ENCODE measurements at regions of chr17 and their contacts with region 1.

Region 1: GRCh38 chr17:67386965-67387551 is 10.0 kb downstream of the PITPNC1 start:
- DNase-seq: no peak
- ATAC-seq: peak; percentile 68
- H3K4me3 ChIP-seq: no peak overlapping the region
- H3K27ac ChIP-seq: peak overlapping the region; percentile 62
- H3K4me1 ChIP-seq: peaks cover 41% of the 10 kb centered on the region
- H3K27me3 ChIP-seq: no peaks in the 10 kb centered on the region
- CTCF ChIP-seq: peak; percentile 90

Region 2: GRCh38 chr17:67475236-67475937 is 88.3 kb after region 1 on chr17:
- CTCF ChIA-PET with region 1: interaction called, 15 read pairs
- POLR2A ChIA-PET with region 1: no interaction called
- in situ Hi-C with region 1: no loop called
- intact Hi-C with region 1: loop called (anchors 2 kb)
- DNase-seq: peak; percentile 80
- ATAC-seq: peak; percentile 85
- H3K4me3 ChIP-seq: no peak overlapping the region
- H3K27ac ChIP-seq: peak overlapping the region; percentile 63
- H3K4me1 ChIP-seq: peaks cover 25% of the 10 kb centered on the region
- H3K27me3 ChIP-seq: no peaks in the 10 kb centered on the region
- CTCF ChIP-seq: peak; percentile 88

Region 3: DNA sequence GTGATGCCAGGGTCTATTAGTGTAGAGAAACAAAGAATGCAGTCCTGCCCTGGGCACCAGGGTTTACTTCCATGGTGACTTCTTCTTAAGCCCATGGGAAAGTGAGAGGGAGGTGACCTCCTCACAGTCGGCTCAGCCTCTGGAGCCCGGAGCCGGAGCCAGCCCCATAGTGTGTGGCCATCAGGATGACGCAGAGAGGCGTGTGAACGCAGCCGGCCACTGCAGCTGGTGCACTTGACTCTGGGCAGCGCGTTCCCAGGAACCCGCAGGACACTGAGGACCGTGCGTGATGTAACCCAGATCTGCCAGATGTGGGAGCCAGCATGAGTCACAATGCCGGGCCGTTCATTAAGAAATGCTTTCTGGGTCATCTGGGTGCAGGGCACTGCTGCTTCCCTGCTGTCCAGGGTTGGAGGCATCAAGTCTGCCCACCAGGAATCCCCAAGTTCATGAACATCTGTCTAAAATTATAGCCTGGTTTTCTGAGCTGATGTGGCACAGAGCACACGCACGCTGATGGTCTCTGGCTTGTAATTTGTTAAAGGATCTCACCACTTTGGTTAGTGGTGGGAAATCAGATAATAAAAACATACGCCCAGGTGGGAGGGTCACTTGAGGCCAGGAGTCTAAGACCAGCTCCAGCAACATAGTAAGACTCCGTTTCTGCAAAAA is 104.1 kb after region 1 on chr17:
- CTCF ChIA-PET with region 1: no interaction called
- POLR2A ChIA-PET with region 1: no interaction called
- in situ Hi-C with region 1: no loop called
- intact Hi-C with region 1: no loop called
- DNase-seq: no peak
- ATAC-seq: peak; percentile 95
- H3K4me3 ChIP-seq: peak overlapping the region; percentile 27 to 51
- H3K27ac ChIP-seq: 0 out of 2 replicates have a peak overlapping the region, but pooled peaks have one; percentile 29
- H3K4me1 ChIP-seq: peaks cover 18% of the 10 kb centered on the region
- H3K27me3 ChIP-seq: no peaks in the 10 kb centered on the region
- CTCF ChIP-seq: no peak

Measured in Panc1 (cell line).